Activated CD4-positive, alpha-beta memory T cell treated with anti-CD3 and anti-CD28 coated beads, Interleukin-2, amount 10 ng/mL, durations not matched to agents 7 days and 5 days (primary cell): ENCODE measurements at regions of chrX and their contacts with region 1.

Region 1: DNA sequence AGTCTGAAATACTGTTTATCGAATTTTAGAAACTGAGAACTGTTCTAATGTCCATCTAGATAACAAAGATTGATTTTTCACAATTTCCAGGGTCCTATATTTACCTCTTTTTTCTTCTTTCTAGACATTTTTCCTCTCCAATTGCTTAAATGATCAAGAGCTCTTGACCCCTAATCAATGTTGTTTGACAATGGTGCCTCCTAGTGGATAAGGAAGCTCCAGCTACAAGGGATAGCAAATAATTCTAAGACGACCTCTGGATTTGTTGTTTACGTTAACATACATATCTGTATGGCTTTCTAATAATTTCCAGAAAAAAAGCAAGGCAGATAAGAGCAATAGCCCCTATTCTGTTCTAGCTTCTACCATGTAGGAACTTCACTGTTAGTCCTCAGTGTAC is 35.8 kb downstream of the GPR82 start:
- DNase-seq: no peak
- H3K4me3 Mint-ChIP-seq: no peak overlapping the region
- H3K27ac Mint-ChIP-seq: no peak overlapping the region
- H3K4me1 Mint-ChIP-seq: peaks cover 3% of the 10 kb centered on the region
- H3K27me3 Mint-ChIP-seq: no peaks in the 10 kb centered on the region

Region 2: DNA sequence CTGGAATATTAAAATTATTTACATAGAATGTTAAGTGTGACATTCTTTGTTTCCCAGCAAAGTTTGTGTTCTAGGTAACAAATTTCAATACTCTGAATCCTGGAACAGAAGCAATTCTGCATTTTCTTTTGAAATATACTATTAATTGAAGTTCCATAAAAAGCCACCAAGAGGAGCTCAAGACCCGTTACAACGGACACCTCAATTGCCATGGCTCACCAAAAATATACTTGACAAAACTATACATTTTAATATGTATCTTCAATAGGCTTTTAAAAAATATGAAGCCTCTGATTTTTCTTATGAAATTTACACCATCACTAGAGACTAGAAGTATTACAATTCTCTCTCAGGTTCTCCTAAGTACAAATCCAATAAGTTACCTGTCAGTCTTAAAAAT is 201.3 kb before region 1 on chrX:
- CTCF ChIA-PET with region 1: interaction called, 12 read pairs
- POLR2A ChIA-PET with region 1: interaction called, 3 read pairs
- DNase-seq: no peak
- H3K4me3 Mint-ChIP-seq: no peak overlapping the region
- H3K27ac Mint-ChIP-seq: peak overlapping the region; percentile 87
- H3K4me1 Mint-ChIP-seq: peaks cover 55% of the 10 kb centered on the region
- H3K27me3 Mint-ChIP-seq: no peaks in the 10 kb centered on the region

Region 3: DNA sequence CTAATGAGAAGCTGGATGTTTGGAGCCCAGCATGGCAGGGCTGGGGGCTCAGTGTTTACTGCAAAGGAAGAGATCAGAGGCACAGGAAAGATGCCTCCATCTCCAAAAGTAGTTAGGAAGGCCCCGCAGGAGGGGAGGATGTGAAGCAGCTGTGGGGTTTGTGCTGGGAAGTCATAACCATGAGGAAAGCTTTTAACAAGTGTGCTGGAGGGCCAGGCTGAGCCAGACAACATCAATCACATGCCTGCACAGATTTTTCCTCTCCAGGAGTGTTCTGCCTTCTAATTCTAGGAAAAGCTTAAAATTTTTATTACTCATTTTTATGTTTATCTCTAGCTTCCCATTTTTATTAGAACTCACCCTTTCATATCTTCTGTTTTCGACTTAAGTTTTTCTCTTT is 29.6 kb after region 1 on chrX:
- CTCF ChIA-PET with region 1: no interaction called
- POLR2A ChIA-PET with region 1: no interaction called
- DNase-seq: no peak
- H3K4me3 Mint-ChIP-seq: no peak overlapping the region
- H3K27ac Mint-ChIP-seq: no peak overlapping the region
- H3K4me1 Mint-ChIP-seq: peaks cover 5% of the 10 kb centered on the region
- H3K27me3 Mint-ChIP-seq: no peaks in the 10 kb centered on the region